PC-9 (cell line): ENCODE measurements at regions of chr1 and their contacts with region 1.

Region 1: GRCh38 chr1:113811888-113812660 is at the start of gene RSBN1:
- DNase-seq: peak; percentile 98 to 99
- H3K4me3 ChIP-seq: peak within 1 kb of the TSS; percentile 72
- H3K27ac ChIP-seq: peak within 1 kb of the TSS; percentile 23
- H3K4me1 ChIP-seq: peaks cover 32% of the 10 kb centered on the region
- H3K27me3 ChIP-seq: no peaks in the 10 kb centered on the region
- CTCF ChIP-seq: no peak
- total RNA-seq, gene RSBN1: 11.3 and 12.3 TPM in 2 replicates

Region 2: DNA sequence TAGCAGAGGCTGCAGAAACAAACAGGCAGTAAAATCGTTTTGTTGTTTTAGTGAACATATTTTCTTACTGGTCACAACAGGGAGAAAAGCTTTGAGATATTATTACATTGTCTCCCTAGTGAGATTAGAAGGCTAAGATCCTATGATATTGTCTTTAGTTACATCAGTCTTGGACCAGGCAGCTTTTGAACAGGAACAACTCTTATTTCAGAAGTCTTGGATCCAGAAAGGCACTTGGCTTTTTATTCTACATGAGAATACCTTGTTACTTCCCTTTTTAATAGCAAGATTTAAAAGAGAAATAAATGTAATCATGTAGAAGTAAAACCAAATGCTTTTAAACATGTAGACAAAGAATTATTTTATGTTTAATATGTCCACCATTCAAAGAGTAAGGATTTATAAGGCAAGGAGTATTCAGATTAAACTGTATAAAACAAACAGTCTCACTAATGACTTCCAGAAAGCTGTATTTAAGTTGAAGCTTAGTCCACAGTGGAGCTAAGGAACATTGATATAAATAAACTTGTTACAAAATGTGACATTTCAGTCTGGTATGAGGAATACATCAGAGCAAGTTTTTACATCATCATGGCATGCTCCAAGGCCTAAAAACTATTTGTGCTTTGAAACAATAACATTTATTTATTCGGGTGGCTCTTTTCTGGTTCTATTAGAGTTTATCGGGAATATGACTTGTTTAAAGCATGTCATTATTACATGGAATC is 125.0 kb before region 1 on chr1:
- CTCF ChIA-PET with region 1: no interaction called
- POLR2A ChIA-PET with region 1: no interaction called
- intact Hi-C with region 1: no loop called
- DNase-seq: no peak
- H3K4me3 ChIP-seq: no peak overlapping the region
- H3K27ac ChIP-seq: no peak overlapping the region
- H3K4me1 ChIP-seq: no peaks in the 10 kb centered on the region
- H3K27me3 ChIP-seq: no peaks in the 10 kb centered on the region
- CTCF ChIP-seq: no peak

Region 3: GRCh38 chr1:113918241-113918640 is 106.2 kb after region 1 on chr1:
- CTCF ChIA-PET with region 1: no interaction called
- POLR2A ChIA-PET with region 1: no interaction called
- intact Hi-C with region 1: no loop called
- DNase-seq: peak in 1 of 2 experiments; percentile 31
- H3K4me3 ChIP-seq: no peak overlapping the region
- H3K27ac ChIP-seq: no peak overlapping the region
- H3K4me1 ChIP-seq: no peaks in the 10 kb centered on the region; the same call in 1 of the 2 replicates
- H3K27me3 ChIP-seq: no peaks in the 10 kb centered on the region
- CTCF ChIP-seq: no peak

Region 4: DNA sequence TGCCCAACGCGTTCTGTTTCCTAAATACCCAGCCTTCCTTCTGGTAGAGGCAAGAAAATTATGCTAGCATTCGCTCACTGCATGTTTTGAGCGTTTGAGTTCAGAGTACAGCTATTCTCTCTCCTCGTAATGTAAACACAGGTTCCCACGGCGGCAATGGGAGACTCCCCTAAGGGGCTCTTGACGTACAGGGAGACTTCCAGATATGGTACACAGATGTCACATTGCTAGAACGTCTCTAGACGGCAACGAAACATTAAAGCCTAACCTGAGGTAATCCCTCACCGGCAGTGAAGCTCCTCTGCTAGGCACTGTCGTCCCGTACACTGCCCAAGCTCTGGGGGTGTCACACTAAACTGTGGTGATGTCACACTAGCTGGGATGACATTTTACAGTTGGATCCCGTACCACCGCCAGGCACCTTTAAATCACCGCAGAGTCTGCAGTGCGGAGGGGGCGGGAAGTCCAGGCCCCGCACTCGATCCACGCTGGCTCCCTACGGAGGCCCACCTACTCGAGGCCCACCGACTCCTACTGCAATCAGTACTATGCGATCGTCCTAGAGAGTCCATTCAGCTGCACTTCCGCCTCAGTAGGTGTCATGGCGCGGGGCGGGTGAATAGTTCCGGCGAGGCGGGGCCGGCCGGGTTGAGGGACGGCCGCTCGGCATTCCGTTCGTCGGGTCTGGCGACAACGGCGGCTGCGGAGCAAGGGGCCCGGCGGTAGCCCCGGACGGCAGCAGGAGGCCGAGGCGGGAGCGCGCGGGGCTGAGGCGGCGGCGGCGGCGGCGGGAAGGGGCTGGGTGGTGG is 117.1 kb after region 1 on chr1 and contains the start of gene HIPK1:
- CTCF ChIA-PET with region 1: no interaction called
- POLR2A ChIA-PET with region 1: interaction called, 7 read pairs
- intact Hi-C with region 1: loop called (anchors 1 kb)
- DNase-seq: peak; percentile 81 to 88
- H3K4me3 ChIP-seq: peak within 1 kb of the TSS; percentile 93
- H3K27ac ChIP-seq: peak within 1 kb of the TSS; percentile 61
- H3K4me1 ChIP-seq: peaks cover 33% of the 10 kb centered on the region
- H3K27me3 ChIP-seq: no peaks in the 10 kb centered on the region
- CTCF ChIP-seq: no peak; the same call in 1 of the 2 replicates
- total RNA-seq, gene HIPK1: 20.0 and 26.3 TPM in 2 replicates